ENCODE measurements at regions of chr15 and their contacts with region 1.

Region 1: GRCh38 chr15:82621964-82622363 is 25.2 kb downstream of the CPEB1 start:
- DNase-seq: no peak
- ATAC-seq: no peak
- H3K4me3 ChIP-seq: no peak overlapping the region
- H3K27ac ChIP-seq: no peak overlapping the region
- H3K4me1 ChIP-seq: no peaks in the 10 kb centered on the region
- H3K27me3 ChIP-seq: no peaks in the 10 kb centered on the region
- CTCF ChIP-seq: no peak
- POLR2A ChIP-seq: no peak

Region 2: GRCh38 chr15:82312586-82313349 is 309.2 kb before region 1 on chr15:
- in situ Hi-C with region 1: no loop called
- intact Hi-C with region 1: no loop called
- DNase-seq: no peak
- ATAC-seq: no peak
- H3K4me3 ChIP-seq: no peak overlapping the region
- H3K27ac ChIP-seq: no peak overlapping the region
- H3K4me1 ChIP-seq: no peaks in the 10 kb centered on the region
- H3K27me3 ChIP-seq: no peaks in the 10 kb centered on the region
- CTCF ChIP-seq: no peak
- POLR2A ChIP-seq: no peak

Region 3: GRCh38 chr15:82709421-82710207 is 87.7 kb after region 1 on chr15 and contains the start of gene AP3B2:
- in situ Hi-C with region 1: loop called in 1 of 4 experiments (anchors 25 kb)
- intact Hi-C with region 1: no loop called
- DNase-seq: peak; percentile 12 to 44
- ATAC-seq: peak; percentile 89
- H3K4me3 ChIP-seq: peak within 1 kb of the TSS; percentile 59 to 93 (median 68)
- H3K27ac ChIP-seq: peak within 1 kb of the TSS in 1 of 4 donors; percentile 36
- H3K4me1 ChIP-seq: peaks cover 3 to 8% of the 10 kb centered on the region in 2 donors
- H3K27me3 ChIP-seq: peaks cover 11 to 16% (median 14%) of the 10 kb centered on the region in 3 donors
- CTCF ChIP-seq: no peak
- POLR2A ChIP-seq: no peak
- total RNA-seq, gene AP3B2: 0.32 TPM in 1 of 4 donors, not detected in the others